Cardiac septum (tissue), 1 donor: ENCODE measurements at regions of chr17 and their contacts with region 1.

Region 1: GRCh38 chr17:68061504-68062313 is 26.2 kb downstream of the KPNA2 start:
- DNase-seq: no peak

Region 2: GRCh38 chr17:67891581-67892054 is 170.1 kb before region 1 on chr17:
- intact Hi-C with region 1: no loop called
- DNase-seq: no peak

Region 3: DNA sequence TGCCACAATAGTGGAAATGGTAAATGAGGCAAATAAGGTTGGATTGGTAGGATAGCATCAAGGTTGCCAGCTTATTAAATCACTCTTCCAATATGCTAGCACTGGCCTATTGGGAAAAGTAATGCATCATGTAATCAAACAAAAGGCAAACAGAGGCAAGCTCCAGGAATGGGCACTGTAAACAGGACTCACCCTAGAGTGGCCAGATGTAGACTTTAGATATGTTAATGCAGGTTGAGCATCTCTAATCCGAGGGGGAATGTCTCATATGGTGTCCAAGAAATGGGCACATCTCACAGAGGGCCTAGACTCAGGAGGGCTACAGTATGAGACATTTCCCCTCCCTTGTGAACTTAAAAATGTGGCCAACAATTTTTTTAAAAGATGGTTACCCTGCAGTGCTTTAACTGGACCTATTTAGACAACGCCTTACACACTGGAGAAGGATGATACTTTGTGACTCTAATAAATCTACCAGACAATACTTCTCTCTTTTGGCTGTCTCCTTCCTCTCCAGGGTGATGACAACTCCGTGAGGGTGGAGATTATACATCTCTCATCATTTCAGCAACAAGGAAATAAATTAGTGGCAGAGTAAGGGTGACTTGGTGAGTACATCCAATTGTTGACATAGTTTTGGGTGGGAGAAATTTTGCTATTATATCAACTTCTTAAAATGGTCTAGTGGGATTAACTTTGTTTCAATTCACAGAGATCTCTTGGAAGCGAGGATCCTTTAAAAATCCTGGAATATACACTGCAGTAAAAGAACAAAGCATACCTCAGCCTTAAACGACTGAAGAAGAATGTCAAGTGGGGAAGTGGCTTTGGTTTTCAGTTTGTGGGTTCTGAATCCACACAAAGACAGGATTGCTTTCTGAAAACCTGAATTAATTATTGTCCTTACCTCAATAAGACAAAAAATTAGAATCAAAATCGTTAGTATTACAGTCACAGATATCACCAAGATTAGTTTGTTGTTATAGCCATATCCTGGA is 63.5 kb after region 1 on chr17:
- intact Hi-C with region 1: no loop called
- DNase-seq: no peak

Region 4: DNA sequence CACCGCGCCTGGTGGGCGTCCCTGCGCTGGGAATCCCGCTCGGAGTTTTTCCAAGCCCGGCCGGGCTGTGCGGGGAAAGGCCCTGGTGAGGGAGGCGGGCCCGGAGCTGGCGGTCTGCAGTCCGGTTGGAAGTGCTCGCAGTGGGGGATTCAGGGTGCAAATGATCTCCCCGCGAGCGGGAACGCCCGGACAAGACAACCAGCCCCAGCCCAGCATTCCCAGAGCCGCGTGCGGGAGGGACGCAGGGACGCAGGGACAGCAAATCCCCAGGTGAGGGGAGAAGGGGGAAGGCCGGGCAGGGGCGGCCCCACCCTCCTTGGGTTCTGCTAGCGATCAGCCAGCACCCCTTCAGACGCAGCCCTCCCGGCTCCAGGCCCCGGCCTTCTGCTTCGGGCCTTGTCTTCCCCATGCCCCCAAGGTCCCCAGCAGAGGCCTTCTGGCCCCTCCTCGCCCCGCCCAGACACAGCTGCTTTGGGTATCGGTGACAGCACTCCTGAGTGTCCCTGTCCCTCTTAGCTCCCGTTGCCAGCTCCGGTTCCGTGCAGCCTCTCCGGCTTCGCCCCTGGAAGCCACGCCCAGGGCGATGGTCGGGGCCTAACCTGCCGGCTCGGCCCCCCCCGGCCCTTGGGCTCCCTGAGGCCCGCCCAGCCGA is 135.4 kb after region 1 on chr17:
- intact Hi-C with region 1: loop called (anchors 10 kb)
- DNase-seq: no peak